SK-N-SH (cell line): ENCODE measurements at regions of chr19 and their contacts with region 1.

Region 1: DNA sequence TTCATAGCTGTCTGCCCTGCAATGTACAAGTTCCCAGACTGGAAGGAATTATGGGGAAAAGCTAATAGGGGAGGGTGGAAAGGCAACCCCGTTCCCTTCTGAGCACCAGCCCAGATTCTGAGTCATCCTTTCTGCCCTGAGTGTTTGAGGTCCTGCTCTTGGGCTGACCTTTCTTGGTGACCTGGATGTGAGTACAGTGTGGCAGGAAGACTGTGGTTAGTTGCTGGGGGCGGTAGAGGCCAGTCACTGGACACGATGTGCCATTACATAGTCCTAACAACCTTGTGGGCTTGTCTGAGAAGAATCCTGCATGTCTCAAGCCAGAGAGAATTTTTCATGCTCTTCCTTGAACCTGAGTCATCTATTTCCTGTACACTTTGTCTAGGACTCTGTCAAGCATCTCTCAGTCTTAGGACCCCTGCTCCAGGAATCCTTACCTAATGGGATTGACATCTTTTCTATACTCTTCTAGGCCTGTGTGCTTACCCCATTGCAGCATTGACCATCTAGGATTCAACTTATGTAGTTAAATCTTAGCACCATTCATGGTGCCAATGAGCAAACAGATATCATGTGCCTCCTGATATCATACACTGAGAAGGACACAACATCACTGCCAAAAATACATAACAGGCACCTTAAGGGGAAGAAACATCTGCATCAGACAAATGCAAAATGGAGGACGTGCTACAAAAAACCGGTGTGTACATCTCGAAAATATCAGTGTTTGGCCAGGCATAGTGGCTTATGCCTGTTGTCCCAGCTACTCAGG is 8.1 kb upstream of the ANGPTL4 start:
- DNase-seq: no peak
- H3K4me3 ChIP-seq: no peak overlapping the region
- H3K27ac ChIP-seq: peak overlapping the region in 1 of 2 experiments; percentile 92; a peak in 2 of 4 replicates
- H3K4me1 ChIP-seq: peaks cover 0 to 12% of the 10 kb centered on the region in 2 experiments; a peak in 2 of 4 replicates
- H3K27me3 ChIP-seq: no peaks in the 10 kb centered on the region
- CTCF ChIP-seq: no peak
- EP300 ChIP-seq: peak in 1 of 2 experiments; percentile 84; a peak in 1 of 4 replicates
- RAD21 ChIP-seq: no peak

Region 2: GRCh38 chr19:8334458-8335342 is 21.1 kb before region 1 on chr19:
- CTCF ChIA-PET with region 1: interaction called, 61 read pairs
- POLR2A ChIA-PET with region 1: interaction called, 3 read pairs
- DNase-seq: peak; percentile 86
- H3K4me3 ChIP-seq: peak overlapping the region; percentile 37 to 39; a peak in 3 of 4 replicates
- H3K27ac ChIP-seq: no peak overlapping the region
- H3K4me1 ChIP-seq: no peaks in the 10 kb centered on the region; a peak in 1 of 4 replicates
- H3K27me3 ChIP-seq: peaks cover 47% of the 10 kb centered on the region
- CTCF ChIP-seq: no peak
- EP300 ChIP-seq: no peak
- RAD21 ChIP-seq: no peak

Region 3: DNA sequence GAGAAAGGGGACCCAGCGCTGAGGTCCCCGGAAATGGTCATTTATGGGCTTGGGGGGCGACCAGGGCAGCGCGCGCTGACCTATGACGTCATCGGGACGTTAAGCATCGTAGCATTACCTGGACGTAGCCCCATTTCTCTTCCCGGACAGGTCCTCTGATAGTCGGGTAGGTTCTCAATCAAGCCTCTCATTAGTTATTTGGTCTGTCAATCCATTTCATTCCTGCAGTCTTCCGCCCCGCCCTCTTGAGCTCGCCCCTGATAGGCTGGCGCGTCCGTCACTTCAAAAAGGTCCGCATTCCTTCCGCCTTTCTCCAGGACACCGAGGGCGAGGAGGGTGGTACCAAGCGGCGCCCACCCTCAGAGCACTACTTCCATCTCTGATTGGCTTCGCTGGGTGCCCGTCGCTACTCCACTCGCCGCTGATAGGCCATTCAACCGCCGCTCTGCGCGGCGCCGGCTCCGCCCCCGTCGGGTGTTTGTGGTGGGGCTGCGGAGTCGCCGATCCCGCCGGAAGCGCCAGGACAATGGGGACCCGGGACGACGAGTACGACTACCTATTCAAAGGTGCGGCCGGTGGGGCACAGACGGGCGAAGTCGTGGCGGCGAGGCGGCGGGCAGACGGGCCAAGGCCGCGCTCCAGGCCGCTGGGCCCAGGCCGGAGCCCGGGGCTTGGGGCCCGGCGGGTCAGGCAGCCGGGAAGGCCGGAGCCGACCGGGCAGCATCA is 34.2 kb after region 1 on chr19 and contains the start of gene RAB11B:
- CTCF ChIA-PET with region 1: interaction called, 78 read pairs
- POLR2A ChIA-PET with region 1: interaction called, 3 read pairs
- DNase-seq: peak; percentile 92
- H3K4me3 ChIP-seq: peak within 1 kb of the TSS; percentile 86 to 91
- H3K27ac ChIP-seq: peak within 1 kb of the TSS; percentile 97 to 99
- H3K4me1 ChIP-seq: peaks cover 14 to 31% of the 10 kb centered on the region in 2 experiments; a peak in 2 of 4 replicates
- H3K27me3 ChIP-seq: no peaks in the 10 kb centered on the region
- CTCF ChIP-seq: no peak
- EP300 ChIP-seq: no peak
- RAD21 ChIP-seq: no peak
- polyA plus RNA-seq, gene RAB11B: 70.5 and 127 TPM in 2 replicates

Region 4: GRCh38 chr19:8412783-8413628 is 57.2 kb after region 1 on chr19 and contains the start of gene MARCHF2:
- CTCF ChIA-PET with region 1: interaction called, 33 read pairs
- POLR2A ChIA-PET with region 1: no interaction called
- DNase-seq: peak; percentile 99
- H3K4me3 ChIP-seq: peak within 1 kb of the TSS; percentile 63 to 77
- H3K27ac ChIP-seq: 0 out of 4 replicates have a peak within 1 kb of the TSS, but pooled peaks of 1 of the 2 experiments have one; percentile 26
- H3K4me1 ChIP-seq: peaks cover 3 to 4% of the 10 kb centered on the region in 2 experiments; a peak in 2 of 4 replicates
- H3K27me3 ChIP-seq: no peaks in the 10 kb centered on the region
- CTCF ChIP-seq: peak; percentile 66
- EP300 ChIP-seq: no peak
- RAD21 ChIP-seq: peak; percentile 50
- polyA plus RNA-seq, gene MARCHF2: 52.9 and 57.2 TPM in 2 replicates

Region 5: DNA sequence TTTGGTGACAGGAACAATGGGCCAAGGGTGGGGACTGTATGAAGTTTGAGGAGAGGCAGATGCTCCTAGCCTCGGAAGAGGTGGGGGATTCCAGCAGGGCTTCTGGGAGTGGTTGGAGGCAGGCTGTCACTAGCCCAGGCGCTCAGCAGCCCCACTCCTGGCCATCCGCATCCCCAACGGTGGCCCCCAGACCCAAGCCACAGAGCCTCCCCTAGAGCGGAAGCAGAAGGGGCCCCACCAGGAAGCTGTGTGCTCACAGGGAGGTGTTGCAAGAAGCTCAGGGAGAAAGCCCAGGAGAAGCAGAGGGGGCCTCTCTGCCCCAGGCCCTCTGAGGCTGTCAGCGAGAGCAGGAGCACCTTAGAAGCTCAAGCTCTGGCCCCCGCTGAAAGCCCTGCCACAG is 138.3 kb after region 1 on chr19:
- CTCF ChIA-PET with region 1: interaction called, 25 read pairs
- POLR2A ChIA-PET with region 1: no interaction called
- DNase-seq: no peak
- H3K4me3 ChIP-seq: no peak overlapping the region
- H3K27ac ChIP-seq: no peak overlapping the region
- H3K4me1 ChIP-seq: no peaks in the 10 kb centered on the region
- H3K27me3 ChIP-seq: no peaks in the 10 kb centered on the region
- CTCF ChIP-seq: no peak
- EP300 ChIP-seq: no peak
- RAD21 ChIP-seq: no peak

Region 6: DNA sequence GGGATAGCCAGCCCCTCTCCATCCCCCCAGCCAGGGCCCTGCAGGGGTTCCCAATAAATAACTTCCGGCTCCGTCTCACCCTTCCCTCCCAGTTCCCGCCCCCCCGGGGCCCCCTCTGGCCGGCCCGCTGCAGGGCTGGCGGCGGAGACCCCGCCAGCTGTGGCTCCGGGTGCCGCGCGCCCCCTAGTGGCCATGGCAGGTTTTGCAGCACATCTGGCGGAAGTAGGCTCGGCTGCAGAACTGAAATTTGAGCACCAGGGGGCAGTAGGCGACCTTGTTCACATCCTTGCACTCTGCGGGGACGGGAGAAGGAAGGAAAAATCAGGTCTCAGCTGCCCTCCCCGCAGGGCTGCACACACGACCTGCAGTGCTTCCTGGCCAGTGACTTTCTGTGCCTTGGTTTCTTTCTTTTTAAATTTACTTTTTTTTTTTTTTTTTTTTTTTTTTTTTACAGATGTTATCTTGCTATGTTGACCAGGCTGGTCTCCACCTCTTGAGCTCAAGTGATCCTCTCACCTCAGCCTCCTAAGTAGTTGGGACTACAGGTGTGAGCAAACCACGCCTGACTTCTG is 225.0 kb after region 1 on chr19:
- CTCF ChIA-PET with region 1: interaction called, 15 read pairs
- POLR2A ChIA-PET with region 1: no interaction called
- DNase-seq: peak; percentile 90
- H3K4me3 ChIP-seq: peak overlapping the region in 1 of 2 experiments; percentile 50; a peak in 1 of 4 replicates
- H3K27ac ChIP-seq: no peak overlapping the region
- H3K4me1 ChIP-seq: no peaks in the 10 kb centered on the region; a peak in 1 of 4 replicates
- H3K27me3 ChIP-seq: no peaks in the 10 kb centered on the region
- CTCF ChIP-seq: peak; percentile 99
- EP300 ChIP-seq: no peak
- RAD21 ChIP-seq: peak; percentile 78